ENCODE measurements at regions of chr5 and their contacts with region 1.

Region 1: GRCh38 chr5:54905943-54906537 is 79.4 kb downstream of the ESM1 start:
- DNase-seq: peak; percentile 59
- H3K4me3 ChIP-seq: no peak overlapping the region
- H3K27ac ChIP-seq: no peak overlapping the region
- H3K27me3 ChIP-seq: no peaks in the 10 kb centered on the region
- CTCF ChIP-seq: peak; percentile 79

Region 2: DNA sequence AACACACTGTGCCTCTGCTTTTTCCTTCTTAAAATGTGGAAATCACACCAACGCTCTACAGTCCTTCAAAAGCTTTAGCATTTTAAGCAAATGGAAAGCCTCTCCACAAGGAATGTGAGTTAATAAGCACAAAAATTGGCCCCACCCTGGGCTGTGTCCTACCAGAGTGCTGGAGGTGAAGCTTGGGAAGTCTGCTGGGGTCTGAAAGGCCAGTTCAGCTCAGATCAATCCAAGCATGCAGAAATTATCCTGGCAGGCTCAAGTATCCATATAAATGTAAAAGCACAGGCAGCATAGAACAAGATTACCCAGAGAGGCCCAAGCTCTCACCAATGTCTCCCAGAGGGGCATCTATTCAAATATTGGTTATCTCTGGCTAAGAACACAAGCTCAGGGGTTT is 19.2 kb before region 1 on chr5:
- CTCF ChIA-PET with region 1: interaction called, 13 read pairs
- POLR2A ChIA-PET with region 1: interaction called, 3 read pairs
- DNase-seq: no peak
- H3K4me3 ChIP-seq: no peak overlapping the region
- H3K27ac ChIP-seq: no peak overlapping the region
- H3K27me3 ChIP-seq: peaks cover 6% of the 10 kb centered on the region
- CTCF ChIP-seq: no peak

Region 3: GRCh38 chr5:54959673-54960418 is 53.8 kb after region 1 on chr5:
- CTCF ChIA-PET with region 1: interaction called, 13 read pairs
- POLR2A ChIA-PET with region 1: no interaction called
- DNase-seq: no peak
- H3K4me3 ChIP-seq: no peak overlapping the region
- H3K27ac ChIP-seq: no peak overlapping the region
- H3K27me3 ChIP-seq: peaks cover 27% of the 10 kb centered on the region
- CTCF ChIP-seq: peak; percentile 39

Region 4: DNA sequence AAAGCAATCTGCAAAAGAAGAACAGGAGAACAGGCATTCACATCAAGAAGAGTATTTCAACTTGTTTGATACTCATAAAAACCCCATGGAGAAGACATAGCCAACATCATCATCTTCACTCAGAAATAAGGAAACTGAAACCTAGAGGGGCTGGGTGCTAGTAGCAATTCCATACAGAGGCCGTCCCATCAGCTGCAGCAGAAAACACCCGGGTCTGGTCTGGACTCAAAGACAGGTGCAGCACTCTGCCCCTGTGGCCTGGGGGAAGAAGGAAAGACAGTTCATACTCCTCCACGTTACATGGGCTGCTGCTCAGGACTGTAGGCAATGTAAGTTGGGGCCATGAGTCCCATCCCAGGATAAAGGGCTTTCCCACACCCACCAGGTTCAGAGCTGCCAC is 208.0 kb after region 1 on chr5:
- CTCF ChIA-PET with region 1: no interaction called
- POLR2A ChIA-PET with region 1: no interaction called
- DNase-seq: no peak
- H3K4me3 ChIP-seq: no peak overlapping the region
- H3K27ac ChIP-seq: no peak overlapping the region
- H3K27me3 ChIP-seq: peaks cover 16% of the 10 kb centered on the region
- CTCF ChIP-seq: no peak

Region 5: DNA sequence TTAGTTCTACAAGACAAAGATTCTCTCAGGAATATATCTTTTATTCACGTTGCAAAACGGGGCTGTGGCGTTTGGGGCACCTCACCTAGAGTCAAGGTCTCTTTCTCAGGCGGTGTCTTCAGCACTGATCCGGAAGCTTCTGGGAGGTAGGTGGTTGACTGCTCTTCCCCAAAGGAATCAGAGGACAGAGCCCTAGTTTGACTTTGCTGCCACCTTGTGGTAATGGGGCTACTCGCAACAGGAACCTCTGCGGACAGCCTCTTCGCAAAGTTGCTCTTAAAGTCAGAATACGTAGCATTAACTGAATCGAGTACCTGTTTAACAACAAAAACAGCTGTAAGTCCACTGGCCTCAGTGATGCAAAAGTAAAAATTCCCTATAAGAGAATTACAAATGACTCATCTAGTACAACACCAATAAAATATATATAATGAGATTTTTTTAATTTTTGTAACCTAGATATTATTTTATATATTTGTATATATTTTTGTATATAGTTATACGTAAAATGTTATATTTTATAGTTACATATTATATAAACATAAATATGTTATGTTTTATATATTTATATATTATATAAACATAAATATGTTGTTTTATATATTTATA is 240.6 kb after region 1 on chr5:
- CTCF ChIA-PET with region 1: interaction called, 74 read pairs
- POLR2A ChIA-PET with region 1: no interaction called
- DNase-seq: peak; percentile 67
- H3K4me3 ChIP-seq: no peak overlapping the region
- H3K27ac ChIP-seq: no peak overlapping the region
- H3K27me3 ChIP-seq: peaks cover 12% of the 10 kb centered on the region
- CTCF ChIP-seq: peak; percentile 99

Region 6: GRCh38 chr5:55151923-55152842 is 246.1 kb after region 1 on chr5:
- CTCF ChIA-PET with region 1: interaction called, 33 read pairs
- POLR2A ChIA-PET with region 1: interaction called, 3 read pairs
- DNase-seq: peak; percentile 55
- H3K4me3 ChIP-seq: no peak overlapping the region
- H3K27ac ChIP-seq: no peak overlapping the region
- H3K27me3 ChIP-seq: no peaks in the 10 kb centered on the region
- CTCF ChIP-seq: no peak

Region 7: GRCh38 chr5:55307383-55308253 is 401.6 kb after region 1 on chr5 and contains the starts of genes DHX29 and MTREX:
- CTCF ChIA-PET with region 1: no interaction called
- POLR2A ChIA-PET with region 1: no interaction called
- DNase-seq: peak; percentile 73
- H3K4me3 ChIP-seq: peak within 1 kb of the TSS; percentile 89
- H3K27ac ChIP-seq: peak within 1 kb of the TSS; percentile 99
- H3K27me3 ChIP-seq: no peaks in the 10 kb centered on the region
- CTCF ChIP-seq: no peak
- polyA plus RNA-seq, gene DHX29: 10.8 and 14.3 TPM in 2 replicates
- polyA plus RNA-seq, gene MTREX: 37.2 and 61.7 TPM in 2 replicates